ENCODE measurements at regions of chr20 and their contacts with region 1.

Region 1: DNA sequence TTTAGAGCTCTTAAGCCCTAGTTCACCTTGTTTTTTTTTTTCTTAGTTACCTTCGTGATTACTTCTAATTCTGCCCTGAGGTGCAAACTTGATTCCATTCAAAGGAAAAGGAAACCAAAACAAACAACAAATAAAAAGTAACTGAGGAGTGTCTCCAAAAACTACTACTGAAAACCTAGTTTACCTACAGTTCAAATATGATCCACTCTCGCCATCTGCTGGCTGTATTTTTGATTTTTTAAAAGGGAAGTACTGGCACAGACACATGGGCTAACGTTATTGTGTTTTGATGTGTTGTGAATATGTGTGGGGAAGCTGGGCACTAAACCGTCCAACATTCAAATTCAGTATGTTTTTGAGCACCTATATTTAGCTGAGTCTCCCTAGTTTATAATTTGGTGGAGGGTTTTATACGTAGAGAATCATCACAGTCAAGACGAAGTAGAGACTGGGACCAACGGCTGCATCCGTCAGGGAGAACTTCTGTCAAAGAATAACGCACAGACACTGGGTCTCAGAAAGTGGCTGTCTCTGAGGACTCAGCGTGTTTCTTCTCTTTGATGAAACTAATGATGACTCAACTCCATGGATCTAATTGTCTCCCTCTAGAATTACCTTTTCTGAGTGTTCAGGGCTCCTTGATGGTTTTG is 373.5 kb upstream of the BTBD3 start:
- DNase-seq: peak in 1 of 2 donors; percentile 87
- H3K4me3 ChIP-seq: no peak overlapping the region
- H3K27ac ChIP-seq: no peak overlapping the region
- H3K4me1 ChIP-seq: peaks cover 0 to 11% (median 5%) of the 10 kb centered on the region in 4 donors
- H3K27me3 ChIP-seq: no peaks in the 10 kb centered on the region
- CTCF ChIP-seq: peak in 4 of 7 experiments; percentile 25 to 71 (median 48)
- EP300 ChIP-seq: no peak
- POLR2A ChIP-seq: no peak

Region 2: GRCh38 chr20:9616833-9617489 is 1927.2 kb before region 1 on chr20:
- intact Hi-C with region 1: loop called (anchors 10 kb)
- DNase-seq: peak; percentile 81 to 91
- H3K4me3 ChIP-seq: no peak overlapping the region
- H3K27ac ChIP-seq: no peak overlapping the region
- H3K4me1 ChIP-seq: peaks cover 0 to 16% (median 4%) of the 10 kb centered on the region in 4 donors
- H3K27me3 ChIP-seq: peaks cover 0 to 10% (median 0%) of the 10 kb centered on the region in 3 donors
- CTCF ChIP-seq: peak in 4 of 7 experiments; percentile 65 to 75 (median 69)
- EP300 ChIP-seq: no peak
- POLR2A ChIP-seq: no peak

Region 3: GRCh38 chr20:10826111-10826510 is 718.0 kb before region 1 on chr20:
- intact Hi-C with region 1: no loop called
- DNase-seq: peak in 1 of 2 donors; percentile 17
- H3K4me3 ChIP-seq: no peak overlapping the region
- H3K27ac ChIP-seq: no peak overlapping the region
- H3K4me1 ChIP-seq: no peaks in the 10 kb centered on the region
- H3K27me3 ChIP-seq: no peaks in the 10 kb centered on the region
- CTCF ChIP-seq: no peak
- EP300 ChIP-seq: no peak
- POLR2A ChIP-seq: no peak